GM12878 (cell line): ENCODE measurements at regions of chr15 and their contacts with region 1.

Region 1: GRCh38 chr15:50009634-50010033 is 109.4 kb downstream of the ATP8B4 start:
- DNase-seq: no peak
- ATAC-seq: peak; percentile 85
- H3K4me3 ChIP-seq: no peak overlapping the region
- H3K27ac ChIP-seq: no peak overlapping the region
- H3K4me1 ChIP-seq: no peaks in the 10 kb centered on the region
- H3K27me3 ChIP-seq: no peaks in the 10 kb centered on the region; a peak in 1 of 4 replicates
- CTCF ChIP-seq: no peak
- EP300 ChIP-seq: peak; percentile 44 to 50; a peak in 1 of 4 replicates
- POLR2A ChIP-seq: no peak
- RAD21 ChIP-seq: no peak

Region 2: GRCh38 chr15:49843725-49844124 is 165.9 kb before region 1 on chr15:
- CTCF ChIA-PET with region 1: no interaction called
- POLR2A ChIA-PET with region 1: no interaction called
- RAD21 ChIA-PET with region 1: no interaction called
- SMC1A ChIA-PET with region 1: no interaction called
- in situ Hi-C with region 1: no loop called
- intact Hi-C with region 1: no loop called
- DNase-seq: no peak
- ATAC-seq: no peak
- H3K4me3 ChIP-seq: no peak overlapping the region
- H3K27ac ChIP-seq: no peak overlapping the region
- H3K4me1 ChIP-seq: no peaks in the 10 kb centered on the region
- H3K27me3 ChIP-seq: no peaks in the 10 kb centered on the region
- CTCF ChIP-seq: no peak
- EP300 ChIP-seq: no peak
- POLR2A ChIP-seq: no peak
- RAD21 ChIP-seq: no peak

Region 3: GRCh38 chr15:49876401-49877038 is 133.1 kb before region 1 on chr15:
- CTCF ChIA-PET with region 1: interaction called, 61 read pairs
- POLR2A ChIA-PET with region 1: no interaction called
- RAD21 ChIA-PET with region 1: interaction called, 40 read pairs
- SMC1A ChIA-PET with region 1: interaction called, 34 read pairs
- in situ Hi-C with region 1: no loop called
- intact Hi-C with region 1: no loop called
- DNase-seq: no peak
- ATAC-seq: no peak
- H3K4me3 ChIP-seq: no peak overlapping the region
- H3K27ac ChIP-seq: no peak overlapping the region
- H3K4me1 ChIP-seq: no peaks in the 10 kb centered on the region
- H3K27me3 ChIP-seq: no peaks in the 10 kb centered on the region
- CTCF ChIP-seq: peak; percentile 28 to 39 (median 37); a peak in 4 of 6 replicates
- EP300 ChIP-seq: no peak
- POLR2A ChIP-seq: no peak
- RAD21 ChIP-seq: peak; percentile 58

Region 4: GRCh38 chr15:50046867-50047266 is 37.2 kb after region 1 on chr15:
- CTCF ChIA-PET with region 1: interaction called, 114 read pairs
- POLR2A ChIA-PET with region 1: interaction called, 5 read pairs
- RAD21 ChIA-PET with region 1: interaction called, 50 read pairs
- SMC1A ChIA-PET with region 1: interaction called, 53 read pairs
- in situ Hi-C with region 1: no loop called
- intact Hi-C with region 1: no loop called
- DNase-seq: no peak
- ATAC-seq: peak; percentile 56
- H3K4me3 ChIP-seq: no peak overlapping the region
- H3K27ac ChIP-seq: no peak overlapping the region
- H3K4me1 ChIP-seq: no peaks in the 10 kb centered on the region
- H3K27me3 ChIP-seq: no peaks in the 10 kb centered on the region
- CTCF ChIP-seq: no peak
- EP300 ChIP-seq: no peak
- POLR2A ChIP-seq: no peak
- RAD21 ChIP-seq: no peak

Region 5: DNA sequence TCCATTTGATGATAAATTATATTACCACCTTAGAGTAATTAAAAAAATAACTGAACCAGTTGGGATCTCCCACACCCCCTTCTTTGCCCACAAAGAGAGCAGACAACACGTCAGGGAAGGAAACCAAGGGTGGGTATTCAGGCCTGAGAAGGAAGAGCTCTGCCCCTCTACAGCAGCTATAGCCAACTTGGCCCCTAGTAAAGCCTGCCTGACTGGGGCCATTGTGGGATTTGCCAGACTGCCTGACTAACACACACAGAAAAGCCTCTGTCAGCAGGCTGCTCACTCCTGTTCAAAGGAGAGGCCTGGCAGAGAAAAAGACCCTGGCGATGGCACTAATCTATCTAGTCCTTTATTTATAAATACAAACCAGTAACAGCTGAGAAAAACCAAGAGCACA is 68.0 kb after region 1 on chr15:
- CTCF ChIA-PET with region 1: no interaction called
- POLR2A ChIA-PET with region 1: no interaction called
- RAD21 ChIA-PET with region 1: no interaction called
- SMC1A ChIA-PET with region 1: no interaction called
- in situ Hi-C with region 1: no loop called
- intact Hi-C with region 1: no loop called
- DNase-seq: no peak
- ATAC-seq: no peak
- H3K4me3 ChIP-seq: no peak overlapping the region
- H3K27ac ChIP-seq: no peak overlapping the region
- H3K4me1 ChIP-seq: no peaks in the 10 kb centered on the region
- H3K27me3 ChIP-seq: no peaks in the 10 kb centered on the region; a peak in 1 of 4 replicates
- CTCF ChIP-seq: no peak
- EP300 ChIP-seq: no peak
- POLR2A ChIP-seq: no peak
- RAD21 ChIP-seq: no peak

Region 6: GRCh38 chr15:50202003-50202770 is 192.6 kb after region 1 on chr15:
- CTCF ChIA-PET with region 1: no interaction called
- POLR2A ChIA-PET with region 1: no interaction called
- RAD21 ChIA-PET with region 1: no interaction called
- SMC1A ChIA-PET with region 1: no interaction called
- in situ Hi-C with region 1: no loop called
- intact Hi-C with region 1: no loop called
- DNase-seq: no peak
- ATAC-seq: no peak
- H3K4me3 ChIP-seq: no peak overlapping the region
- H3K27ac ChIP-seq: no peak overlapping the region
- H3K4me1 ChIP-seq: no peaks in the 10 kb centered on the region
- H3K27me3 ChIP-seq: no peaks in the 10 kb centered on the region
- CTCF ChIP-seq: no peak
- EP300 ChIP-seq: no peak
- POLR2A ChIP-seq: no peak
- RAD21 ChIP-seq: no peak